ENCODE measurements at regions of chr1 and their contacts with region 1.

Region 1: DNA sequence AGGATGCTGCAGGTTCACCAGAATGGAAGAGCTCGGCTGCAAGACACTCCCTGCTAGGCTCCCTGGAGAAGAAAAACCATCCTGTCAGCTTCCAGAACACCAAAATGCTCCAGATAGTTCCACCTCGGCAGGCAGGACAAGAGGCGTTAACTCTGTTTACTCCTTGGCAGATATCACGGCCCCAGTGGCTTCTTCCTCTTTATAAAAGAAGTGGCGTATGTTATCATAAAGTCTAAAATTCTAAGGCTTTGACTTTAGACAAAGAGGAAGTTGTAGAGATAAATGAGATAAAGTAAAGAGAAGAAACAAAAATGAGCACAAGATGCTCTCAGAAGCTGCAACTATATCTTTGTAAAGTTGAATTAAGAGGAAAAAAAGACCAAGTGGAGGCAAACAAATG is 24.3 kb upstream of the MTF1 start:
- DNase-seq: no peak
- ATAC-seq: no peak
- H3K4me3 ChIP-seq: no peak overlapping the region
- H3K27ac ChIP-seq: no peak overlapping the region
- H3K4me1 ChIP-seq: no peaks in the 10 kb centered on the region
- H3K27me3 ChIP-seq: no peaks in the 10 kb centered on the region

Region 2: GRCh38 chr1:37682334-37682987 is 201.2 kb before region 1 on chr1:
- intact Hi-C with region 1: no loop called
- DNase-seq: peak; percentile 66 to 84 (median 74)
- ATAC-seq: peak; percentile 64
- H3K4me3 ChIP-seq: no peak overlapping the region
- H3K27ac ChIP-seq: no peak overlapping the region
- H3K4me1 ChIP-seq: no peaks in the 10 kb centered on the region
- H3K27me3 ChIP-seq: no peaks in the 10 kb centered on the region

Region 3: GRCh38 chr1:37965301-37965700 is 81.6 kb after region 1 on chr1:
- intact Hi-C with region 1: loop called in 1 of 4 experiments (anchors 10 kb)
- DNase-seq: no peak
- ATAC-seq: no peak
- H3K4me3 ChIP-seq: no peak overlapping the region
- H3K27ac ChIP-seq: no peak overlapping the region
- H3K4me1 ChIP-seq: no peaks in the 10 kb centered on the region
- H3K27me3 ChIP-seq: no peaks in the 10 kb centered on the region

Region 4: GRCh38 chr1:37978541-37978940 is 94.9 kb after region 1 on chr1:
- intact Hi-C with region 1: loop called in 2 of 4 experiments (anchors 5 to 10 kb)
- DNase-seq: no peak
- ATAC-seq: no peak
- H3K4me3 ChIP-seq: no peak overlapping the region
- H3K27ac ChIP-seq: no peak overlapping the region
- H3K4me1 ChIP-seq: no peaks in the 10 kb centered on the region
- H3K27me3 ChIP-seq: no peaks in the 10 kb centered on the region

Region 5: DNA sequence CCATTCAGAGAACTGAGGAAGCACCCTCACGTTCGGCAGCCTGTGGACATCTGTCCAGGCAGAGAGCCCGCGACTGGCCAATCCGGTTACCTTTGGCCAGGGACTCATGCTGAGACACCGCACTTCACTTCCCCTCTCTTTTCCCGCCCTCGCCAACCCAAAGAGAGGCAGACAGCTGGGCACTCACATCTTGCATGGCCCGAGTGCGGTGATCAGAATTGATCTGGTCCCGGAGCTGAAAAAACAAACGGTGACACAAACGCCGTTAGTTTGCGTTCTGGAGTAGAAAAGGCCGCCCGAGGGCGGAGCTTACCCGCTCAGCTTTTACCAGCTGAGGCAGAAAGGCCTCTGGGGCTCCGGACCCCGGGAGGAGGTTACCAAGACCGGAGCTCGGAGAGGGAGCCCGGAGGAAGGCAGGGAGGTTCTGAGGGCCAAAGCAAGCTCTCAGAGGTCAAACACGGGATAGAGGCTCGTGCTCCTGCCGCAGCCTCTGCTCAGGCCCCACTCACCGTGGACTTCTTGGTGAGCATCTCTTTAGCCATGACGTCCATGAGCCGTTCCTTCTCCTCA is 105.8 kb after region 1 on chr1:
- intact Hi-C with region 1: loop called in 1 of 4 experiments (anchors 10 kb)
- DNase-seq: peak; percentile 45 to 73 (median 69)
- ATAC-seq: peak; percentile 42 to 54
- H3K4me3 ChIP-seq: peak overlapping the region; percentile 92
- H3K27ac ChIP-seq: peak overlapping the region; percentile 85
- H3K4me1 ChIP-seq: no peaks in the 10 kb centered on the region
- H3K27me3 ChIP-seq: no peaks in the 10 kb centered on the region